ENCODE measurements at regions of chr1 and their contacts with region 1.

Region 1: DNA sequence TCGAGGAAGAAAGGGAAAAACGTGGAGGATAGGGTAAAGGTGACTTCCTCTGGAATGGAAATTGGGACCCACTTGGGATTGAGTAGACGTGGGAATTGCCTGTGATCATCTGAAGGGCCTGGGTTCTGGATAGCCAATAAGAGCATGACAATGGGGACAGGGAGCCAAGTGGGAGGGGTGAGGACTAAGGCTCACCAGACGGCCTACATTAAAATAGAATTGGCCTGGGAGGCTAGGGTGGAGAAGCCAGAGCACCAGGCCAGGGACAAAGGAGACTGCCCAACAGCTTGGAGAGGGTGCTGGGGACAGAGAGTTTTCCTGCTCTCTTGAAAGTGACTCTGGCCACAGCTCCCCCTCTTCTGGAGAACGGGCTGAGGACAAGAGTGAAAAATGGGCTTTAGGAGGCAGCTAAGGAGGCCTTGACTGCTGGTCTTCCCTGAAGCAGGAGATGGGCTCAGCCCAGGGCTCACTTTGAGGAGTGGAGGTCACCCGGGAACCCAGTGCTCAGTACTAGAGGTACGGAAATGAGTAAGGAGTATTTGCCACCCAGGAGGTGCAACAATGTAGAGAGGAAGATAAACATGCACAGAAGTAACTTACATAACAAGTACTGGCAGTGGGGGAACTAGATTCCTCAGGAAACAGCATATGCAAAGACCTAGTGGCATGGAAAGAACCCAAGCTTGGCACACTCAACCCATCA is 18.8 kb downstream of the INKA2 start:
- DNase-seq: no peak
- ATAC-seq: no peak
- H3K4me3 ChIP-seq: no peak overlapping the region
- H3K4me3 Mint-ChIP-seq: no peak overlapping the region
- H3K27ac ChIP-seq: no peak overlapping the region
- H3K27ac Mint-ChIP-seq: peak overlapping the region; percentile 65
- H3K4me1 ChIP-seq: peaks cover 21% of the 10 kb centered on the region
- H3K4me1 Mint-ChIP-seq: peaks cover 36% of the 10 kb centered on the region
- H3K27me3 ChIP-seq: no peaks in the 10 kb centered on the region
- H3K27me3 Mint-ChIP-seq: no peaks in the 10 kb centered on the region
- CTCF ChIP-seq: no peak

Region 2: GRCh38 chr1:111739194-111739924 is 18.9 kb after region 1 on chr1 and contains the start of gene INKA2:
- CTCF ChIA-PET with region 1: no interaction called
- POLR2A ChIA-PET with region 1: no interaction called
- intact Hi-C with region 1: loop called in 1 of 2 experiments (anchors 2 kb)
- DNase-seq: peak in 13 of 14 experiments; percentile 12 to 79 (median 53)
- ATAC-seq: peak; percentile 60
- H3K4me3 ChIP-seq: peak within 1 kb of the TSS; percentile 53
- H3K4me3 Mint-ChIP-seq: peak within 1 kb of the TSS; percentile 91
- H3K27ac ChIP-seq: no peak within 1 kb of the TSS
- H3K27ac Mint-ChIP-seq: no peak within 1 kb of the TSS
- H3K4me1 ChIP-seq: peaks cover 30% of the 10 kb centered on the region
- H3K4me1 Mint-ChIP-seq: peaks cover 21% of the 10 kb centered on the region
- H3K27me3 ChIP-seq: peaks cover 34 to 36% of the 10 kb centered on the region in 2 experiments
- H3K27me3 Mint-ChIP-seq: peaks cover 32% of the 10 kb centered on the region
- CTCF ChIP-seq: no peak
- total RNA-seq, gene INKA2: 0.27 TPM in 1 of 2 experiments, not detected in the other

Region 3: GRCh38 chr1:111747282-111747734 is 26.9 kb after region 1 on chr1:
- CTCF ChIA-PET with region 1: interaction called, 6 read pairs
- POLR2A ChIA-PET with region 1: no interaction called
- intact Hi-C with region 1: loop called (anchors 1 to 2 kb)
- DNase-seq: peak; percentile 19 to 86 (median 45)
- ATAC-seq: peak; percentile 66
- H3K4me3 ChIP-seq: no peak overlapping the region
- H3K4me3 Mint-ChIP-seq: no peak overlapping the region
- H3K27ac ChIP-seq: no peak overlapping the region
- H3K27ac Mint-ChIP-seq: no peak overlapping the region
- H3K4me1 ChIP-seq: no peaks in the 10 kb centered on the region
- H3K4me1 Mint-ChIP-seq: no peaks in the 10 kb centered on the region
- H3K27me3 ChIP-seq: no peaks in the 10 kb centered on the region
- H3K27me3 Mint-ChIP-seq: no peaks in the 10 kb centered on the region
- CTCF ChIP-seq: peak; percentile 49

Region 4: GRCh38 chr1:111755331-111756123 is 35.1 kb after region 1 on chr1 and contains the start of gene DDX20:
- CTCF ChIA-PET with region 1: interaction called, 27 read pairs
- POLR2A ChIA-PET with region 1: interaction called, 5 read pairs
- intact Hi-C with region 1: loop called (anchors 1 to 2 kb)
- DNase-seq: peak; percentile 87 to 97 (median 92)
- ATAC-seq: peak; percentile 85
- H3K4me3 ChIP-seq: peak within 1 kb of the TSS; percentile 89
- H3K4me3 Mint-ChIP-seq: peak within 1 kb of the TSS; percentile 89
- H3K27ac ChIP-seq: peak within 1 kb of the TSS; percentile 89 to 95
- H3K27ac Mint-ChIP-seq: peak within 1 kb of the TSS; percentile 96
- H3K4me1 ChIP-seq: peaks cover 24% of the 10 kb centered on the region
- H3K4me1 Mint-ChIP-seq: peaks cover 45% of the 10 kb centered on the region
- H3K27me3 ChIP-seq: no peaks in the 10 kb centered on the region
- H3K27me3 Mint-ChIP-seq: no peaks in the 10 kb centered on the region
- CTCF ChIP-seq: peak; percentile 89
- total RNA-seq, gene DDX20: 27.2 to 27.4 TPM

Region 5: GRCh38 chr1:111769517-111770146 is 49.2 kb after region 1 on chr1:
- CTCF ChIA-PET with region 1: interaction called, 96 read pairs
- POLR2A ChIA-PET with region 1: no interaction called
- intact Hi-C with region 1: loop called (anchors 1 kb)
- DNase-seq: peak in 12 of 14 experiments; percentile 11 to 84 (median 42)
- ATAC-seq: peak; percentile 68
- H3K4me3 ChIP-seq: no peak overlapping the region
- H3K4me3 Mint-ChIP-seq: no peak overlapping the region
- H3K27ac ChIP-seq: no peak overlapping the region
- H3K27ac Mint-ChIP-seq: peak overlapping the region; percentile 40
- H3K4me1 ChIP-seq: no peaks in the 10 kb centered on the region
- H3K4me1 Mint-ChIP-seq: peaks cover 9% of the 10 kb centered on the region
- H3K27me3 ChIP-seq: no peaks in the 10 kb centered on the region
- H3K27me3 Mint-ChIP-seq: no peaks in the 10 kb centered on the region
- CTCF ChIP-seq: peak; percentile 82

Measured in CD4-positive, alpha-beta T cell (primary cell).